ENCODE measurements at regions of chr1 and their contacts with region 1.

Region 1: DNA sequence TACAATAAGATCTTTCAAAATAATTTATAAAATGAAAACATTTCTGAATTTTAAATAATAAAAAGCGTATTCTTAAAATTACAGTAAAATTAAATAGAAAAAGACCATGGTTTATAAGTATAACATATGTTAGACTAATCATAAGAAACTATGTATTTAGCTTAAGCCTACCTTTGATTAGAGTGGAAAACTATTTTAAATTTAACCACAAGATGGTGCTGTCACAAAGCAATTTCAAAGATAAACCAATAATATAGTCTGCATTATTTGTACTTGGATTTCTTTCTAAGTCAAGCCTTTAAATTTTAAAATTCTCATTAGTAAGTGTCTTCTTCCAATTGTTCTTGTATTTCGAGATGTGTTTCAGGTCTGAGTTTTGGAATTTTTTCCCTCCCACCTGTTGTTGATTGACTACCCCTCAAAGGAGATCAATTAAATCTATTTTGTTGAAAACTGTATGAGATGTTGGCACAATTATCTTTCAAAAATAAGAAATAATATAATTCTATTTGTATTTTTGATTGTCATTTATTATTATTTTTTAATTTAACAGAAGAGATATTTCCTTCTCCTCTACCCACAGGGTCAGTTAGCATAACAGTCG is 459.8 kb downstream of the KCNT2 start:
- DNase-seq: no peak
- H3K4me3 ChIP-seq: no peak overlapping the region
- H3K27ac ChIP-seq: no peak overlapping the region
- H3K4me1 ChIP-seq: no peaks in the 10 kb centered on the region
- H3K27me3 ChIP-seq: no peaks in the 10 kb centered on the region
- CTCF ChIP-seq: peak in 2 of 3 experiments; percentile 41 to 42
- POLR2A ChIP-seq: no peak

Region 2: DNA sequence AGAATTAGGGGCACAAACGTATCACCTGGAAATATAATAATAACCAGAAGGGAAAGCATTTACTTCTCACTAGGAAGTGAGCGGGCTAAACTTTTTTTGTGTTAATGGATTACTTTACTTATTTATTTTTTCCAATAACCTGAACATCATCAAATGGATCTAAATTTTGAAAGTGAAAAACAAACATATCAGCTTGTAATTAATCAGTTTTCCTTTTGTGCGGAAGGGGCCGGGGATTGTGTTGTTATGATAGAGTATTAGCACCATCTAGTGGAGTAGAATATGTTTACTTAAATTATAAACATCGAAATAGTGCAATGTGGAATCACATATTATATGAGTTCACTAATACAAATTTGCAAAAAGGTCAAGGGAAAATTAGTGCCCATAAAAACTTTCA is 512.4 kb after region 1 on chr1:
- intact Hi-C with region 1: loop called (anchors 10 kb)
- DNase-seq: no peak
- H3K4me3 ChIP-seq: no peak overlapping the region
- H3K27ac ChIP-seq: no peak overlapping the region
- H3K4me1 ChIP-seq: no peaks in the 10 kb centered on the region
- H3K27me3 ChIP-seq: no peaks in the 10 kb centered on the region
- CTCF ChIP-seq: peak in 2 of 3 experiments; percentile 39 to 66
- POLR2A ChIP-seq: no peak